CD8-positive, alpha-beta T cell (primary cell): ENCODE measurements at regions of chr11 and their contacts with region 1.

Region 1: GRCh38 chr11:113289431-113290187 is 24.8 kb upstream of the TTC12 start:
- DNase-seq: peak; percentile 24 to 74 (median 54)
- ATAC-seq: peak; percentile 85
- H3K4me3 ChIP-seq: no peak overlapping the region
- H3K4me3 Mint-ChIP-seq: no peak overlapping the region
- H3K27ac ChIP-seq: no peak overlapping the region
- H3K27ac Mint-ChIP-seq: no peak overlapping the region
- H3K4me1 ChIP-seq: no peaks in the 10 kb centered on the region
- H3K4me1 Mint-ChIP-seq: no peaks in the 10 kb centered on the region
- H3K27me3 ChIP-seq: no peaks in the 10 kb centered on the region
- H3K27me3 Mint-ChIP-seq: peaks cover 24% of the 10 kb centered on the region
- CTCF ChIP-seq: peak; percentile 64

Region 2: DNA sequence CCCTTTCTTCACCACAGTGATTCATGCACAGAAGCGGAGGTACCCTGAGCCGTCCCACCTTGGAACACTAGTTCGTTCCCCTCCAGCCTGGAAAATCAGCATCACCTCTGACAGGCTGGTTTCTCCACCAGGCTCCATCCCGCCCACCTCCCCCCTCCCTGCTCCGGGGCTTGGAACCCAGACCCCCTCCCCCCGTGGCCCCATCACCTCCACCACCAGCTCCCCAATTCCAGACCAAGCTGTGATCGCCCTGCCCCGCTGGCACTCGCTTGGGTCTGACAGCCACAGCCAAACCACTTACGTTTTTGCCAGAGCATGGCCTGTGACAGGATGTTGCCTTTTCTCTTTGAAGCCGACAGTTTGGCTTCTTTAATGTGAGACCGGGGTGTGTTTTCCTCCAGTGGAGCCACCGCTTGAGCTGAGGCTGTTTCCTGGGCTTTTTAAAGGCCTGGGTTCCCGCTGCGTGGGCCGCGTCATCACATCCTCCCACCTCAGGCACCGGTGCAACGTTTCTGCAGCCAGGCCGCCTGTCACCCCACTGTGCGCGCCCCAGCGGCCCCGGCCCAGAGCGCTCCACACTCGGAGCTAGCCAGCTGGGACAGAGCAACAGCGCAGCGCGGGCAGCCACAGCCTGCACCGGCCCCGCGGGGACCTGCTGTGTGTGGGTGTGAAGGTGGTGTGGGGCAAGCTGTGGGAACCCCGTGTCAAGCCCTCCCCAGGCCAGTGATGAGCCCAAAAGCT is 1910.6 kb before region 1 on chr11 and contains the start of gene POU2AF1:
- CTCF ChIA-PET with region 1: no interaction called
- POLR2A ChIA-PET with region 1: no interaction called
- intact Hi-C with region 1: no loop called
- DNase-seq: peak; percentile 26 to 81 (median 63)
- ATAC-seq: peak; percentile 87
- H3K4me3 ChIP-seq: peak within 1 kb of the TSS; percentile 23 to 45
- H3K4me3 Mint-ChIP-seq: peak within 1 kb of the TSS; percentile 82
- H3K27ac ChIP-seq: peak within 1 kb of the TSS; percentile 31 to 38
- H3K27ac Mint-ChIP-seq: peak within 1 kb of the TSS; percentile 95
- H3K4me1 ChIP-seq: peaks cover 22% of the 10 kb centered on the region
- H3K4me1 Mint-ChIP-seq: peaks cover 29% of the 10 kb centered on the region
- H3K27me3 ChIP-seq: no peaks in the 10 kb centered on the region
- H3K27me3 Mint-ChIP-seq: no peaks in the 10 kb centered on the region
- CTCF ChIP-seq: no peak
- total RNA-seq, gene POU2AF1: 1.0 to 1.1 TPM

Region 3: DNA sequence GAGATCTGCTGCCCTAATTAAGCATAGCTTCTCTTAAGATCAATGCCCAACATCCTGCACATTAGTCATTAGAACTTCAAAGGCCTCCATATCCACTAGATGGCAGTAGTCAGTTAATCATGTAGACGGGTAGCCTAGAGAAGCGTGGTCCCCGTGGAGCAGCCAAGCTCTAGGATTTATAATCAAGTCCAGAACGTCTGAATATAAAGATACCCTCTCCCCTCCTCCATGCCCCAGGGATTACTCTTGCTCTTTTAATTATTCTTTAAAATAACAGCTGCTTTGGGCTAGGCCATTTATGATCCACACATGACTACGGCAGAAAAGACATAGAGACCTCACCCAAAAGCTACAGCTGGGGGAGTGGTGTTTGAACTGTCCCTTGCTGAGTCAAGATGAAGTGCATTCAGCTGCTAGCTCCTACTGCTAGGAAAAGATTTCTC is 701.3 kb before region 1 on chr11:
- CTCF ChIA-PET with region 1: interaction called, 19 read pairs
- POLR2A ChIA-PET with region 1: no interaction called
- intact Hi-C with region 1: loop called in 1 of 2 experiments (anchors 1 kb)
- DNase-seq: peak in 7 of 9 experiments; percentile 7 to 67 (median 27)
- ATAC-seq: peak; percentile 36
- H3K4me3 ChIP-seq: no peak overlapping the region
- H3K4me3 Mint-ChIP-seq: no peak overlapping the region
- H3K27ac ChIP-seq: no peak overlapping the region
- H3K27ac Mint-ChIP-seq: no peak overlapping the region
- H3K4me1 ChIP-seq: no peaks in the 10 kb centered on the region
- H3K4me1 Mint-ChIP-seq: peaks cover 2% of the 10 kb centered on the region
- H3K27me3 ChIP-seq: no peaks in the 10 kb centered on the region
- H3K27me3 Mint-ChIP-seq: peaks cover 13% of the 10 kb centered on the region
- CTCF ChIP-seq: peak; percentile 58

Region 4: DNA sequence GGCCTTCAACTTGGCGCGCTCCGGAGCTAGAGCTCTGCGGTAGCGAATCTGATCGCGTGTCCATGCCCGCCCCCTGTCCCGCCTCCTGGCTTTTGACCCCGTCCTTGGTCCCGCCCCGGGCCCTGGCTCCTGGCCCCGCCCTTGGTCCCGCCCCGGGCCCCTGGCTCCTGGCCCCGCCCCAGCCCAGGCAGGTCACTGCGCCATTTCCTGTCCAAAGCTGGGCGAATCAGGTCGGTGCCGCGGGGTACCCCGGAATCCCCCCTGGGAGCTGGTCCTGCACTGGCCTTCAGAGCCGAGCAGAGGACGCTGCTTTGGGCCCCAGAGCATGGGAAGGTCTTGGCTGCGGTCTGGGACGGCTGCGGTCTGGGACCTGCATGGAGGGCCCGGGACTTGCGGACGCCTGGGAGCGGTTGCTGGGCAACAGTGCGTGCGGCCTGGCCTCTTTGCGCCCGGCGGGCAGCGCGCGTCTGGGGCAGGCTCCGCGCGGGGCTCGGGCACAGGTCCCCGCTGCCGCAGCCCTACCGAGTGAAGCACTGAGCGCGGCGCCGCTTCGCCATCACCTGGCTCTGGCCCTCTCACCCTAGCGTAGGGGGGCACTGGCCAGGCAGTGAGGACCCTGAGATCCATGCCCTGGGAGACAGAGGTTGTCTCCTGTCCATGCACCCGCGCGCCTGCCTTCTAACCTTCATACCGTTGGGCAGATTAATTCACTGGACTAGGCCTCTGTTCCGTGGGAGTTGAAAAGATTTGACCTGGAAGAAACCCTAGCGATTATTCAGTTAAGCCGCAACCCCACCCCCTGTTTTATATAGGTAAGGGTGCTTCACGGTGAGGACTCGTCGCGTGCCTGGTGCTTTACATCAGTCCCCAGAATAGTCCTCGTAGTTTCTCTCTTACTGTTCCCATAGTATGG is 25.0 kb after region 1 on chr11 and contains the start of gene TTC12:
- CTCF ChIA-PET with region 1: interaction called, 10 read pairs
- POLR2A ChIA-PET with region 1: no interaction called
- intact Hi-C with region 1: no loop called
- DNase-seq: peak; percentile 82 to 95 (median 90)
- ATAC-seq: peak; percentile 98
- H3K4me3 ChIP-seq: peak within 1 kb of the TSS; percentile 59 to 66
- H3K4me3 Mint-ChIP-seq: peak within 1 kb of the TSS; percentile 82
- H3K27ac ChIP-seq: peak within 1 kb of the TSS; percentile 81 to 87
- H3K27ac Mint-ChIP-seq: peak within 1 kb of the TSS; percentile 85
- H3K4me1 ChIP-seq: peaks cover 17% of the 10 kb centered on the region
- H3K4me1 Mint-ChIP-seq: peaks cover 30% of the 10 kb centered on the region
- H3K27me3 ChIP-seq: no peaks in the 10 kb centered on the region
- H3K27me3 Mint-ChIP-seq: no peaks in the 10 kb centered on the region
- CTCF ChIP-seq: no peak
- total RNA-seq, gene TTC12: 8.6 to 10.8 TPM

Region 5: DNA sequence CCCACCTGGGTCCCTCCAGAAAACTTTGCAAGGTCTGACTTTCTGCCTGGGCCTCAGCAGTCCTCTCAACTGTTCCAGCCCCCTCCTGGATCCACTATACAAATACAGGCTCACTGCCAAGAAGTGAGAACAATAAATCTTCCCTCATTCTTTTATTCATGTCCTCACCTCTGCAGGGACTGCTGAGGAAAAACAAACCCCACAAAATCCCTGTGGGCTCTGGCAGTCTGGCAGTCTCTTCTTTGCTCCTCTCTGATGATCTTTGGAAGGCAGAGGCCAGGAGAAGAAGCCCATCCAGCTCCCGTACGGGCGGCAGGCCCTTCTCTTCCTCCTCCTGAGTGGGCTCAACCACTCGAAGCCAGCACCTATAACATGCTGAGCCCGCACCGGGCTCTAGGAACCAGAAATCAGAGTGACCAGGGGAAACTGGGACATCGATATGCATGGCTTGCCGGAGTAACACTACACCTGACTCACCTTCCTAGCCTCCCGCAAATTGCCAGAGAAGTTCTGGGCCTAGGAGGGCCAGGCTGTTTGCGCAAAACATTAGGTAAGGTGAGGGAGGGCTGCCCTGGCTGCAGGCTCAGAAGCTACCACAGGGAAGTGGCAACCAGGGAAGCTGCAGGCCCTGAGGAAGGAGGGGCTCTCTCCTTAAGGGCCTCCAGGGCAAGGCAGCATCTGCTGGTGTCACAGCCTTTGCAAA is 392.3 kb after region 1 on chr11:
- CTCF ChIA-PET with region 1: no interaction called
- POLR2A ChIA-PET with region 1: no interaction called
- intact Hi-C with region 1: no loop called
- DNase-seq: no peak
- ATAC-seq: no peak
- H3K4me3 ChIP-seq: no peak overlapping the region
- H3K4me3 Mint-ChIP-seq: no peak overlapping the region
- H3K27ac ChIP-seq: no peak overlapping the region
- H3K27ac Mint-ChIP-seq: no peak overlapping the region
- H3K4me1 ChIP-seq: no peaks in the 10 kb centered on the region
- H3K4me1 Mint-ChIP-seq: no peaks in the 10 kb centered on the region
- H3K27me3 ChIP-seq: no peaks in the 10 kb centered on the region
- H3K27me3 Mint-ChIP-seq: no peaks in the 10 kb centered on the region
- CTCF ChIP-seq: no peak